Activated naive CD4-positive, alpha-beta T cell treated with anti-CD3 and anti-CD28 coated beads for 36 hours (primary cell): ENCODE measurements at regions of chr6 and their contacts with region 1.

Region 1: DNA sequence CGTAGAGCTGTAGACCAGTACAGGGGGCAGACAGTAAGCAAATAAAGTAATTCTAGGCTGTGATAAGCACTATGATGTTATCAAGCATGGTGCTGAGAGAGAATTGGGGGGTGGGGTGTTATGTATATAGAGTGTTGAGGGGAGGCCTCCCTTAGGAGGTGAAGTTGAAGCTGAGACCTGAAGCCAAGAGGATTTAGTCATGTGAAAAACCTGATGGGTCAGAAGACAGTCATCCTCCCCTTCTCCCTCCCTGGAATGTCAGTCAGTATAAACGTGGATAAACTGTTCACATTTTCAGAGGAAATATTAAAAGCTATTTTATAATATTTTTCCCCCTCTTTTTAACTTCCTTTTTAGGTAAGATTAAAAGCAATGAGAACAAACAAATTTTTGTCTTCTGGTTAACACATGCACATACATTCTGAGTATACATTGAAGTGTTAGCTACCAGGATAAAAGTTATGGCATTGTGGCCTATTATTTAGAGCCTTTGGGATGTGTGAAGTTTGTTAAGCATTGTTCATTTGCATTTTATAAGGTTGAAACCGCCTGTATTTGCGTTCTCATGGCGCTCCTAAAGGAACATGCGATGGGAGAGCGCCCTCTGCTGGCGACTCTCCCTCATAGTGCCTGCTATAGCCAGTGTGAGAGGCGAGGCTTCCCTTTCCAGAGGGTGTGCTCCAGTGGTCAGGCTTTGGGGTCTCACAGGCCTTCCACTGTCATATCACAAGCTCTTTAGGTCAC is 35.4 kb upstream of the MAPK13 start:
- DNase-seq: peak; percentile 90
- H3K4me3 Mint-ChIP-seq: no peak overlapping the region
- H3K27ac Mint-ChIP-seq: peak overlapping the region; percentile 42
- H3K4me1 Mint-ChIP-seq: peaks cover 29% of the 10 kb centered on the region
- H3K27me3 Mint-ChIP-seq: no peaks in the 10 kb centered on the region

Region 2: DNA sequence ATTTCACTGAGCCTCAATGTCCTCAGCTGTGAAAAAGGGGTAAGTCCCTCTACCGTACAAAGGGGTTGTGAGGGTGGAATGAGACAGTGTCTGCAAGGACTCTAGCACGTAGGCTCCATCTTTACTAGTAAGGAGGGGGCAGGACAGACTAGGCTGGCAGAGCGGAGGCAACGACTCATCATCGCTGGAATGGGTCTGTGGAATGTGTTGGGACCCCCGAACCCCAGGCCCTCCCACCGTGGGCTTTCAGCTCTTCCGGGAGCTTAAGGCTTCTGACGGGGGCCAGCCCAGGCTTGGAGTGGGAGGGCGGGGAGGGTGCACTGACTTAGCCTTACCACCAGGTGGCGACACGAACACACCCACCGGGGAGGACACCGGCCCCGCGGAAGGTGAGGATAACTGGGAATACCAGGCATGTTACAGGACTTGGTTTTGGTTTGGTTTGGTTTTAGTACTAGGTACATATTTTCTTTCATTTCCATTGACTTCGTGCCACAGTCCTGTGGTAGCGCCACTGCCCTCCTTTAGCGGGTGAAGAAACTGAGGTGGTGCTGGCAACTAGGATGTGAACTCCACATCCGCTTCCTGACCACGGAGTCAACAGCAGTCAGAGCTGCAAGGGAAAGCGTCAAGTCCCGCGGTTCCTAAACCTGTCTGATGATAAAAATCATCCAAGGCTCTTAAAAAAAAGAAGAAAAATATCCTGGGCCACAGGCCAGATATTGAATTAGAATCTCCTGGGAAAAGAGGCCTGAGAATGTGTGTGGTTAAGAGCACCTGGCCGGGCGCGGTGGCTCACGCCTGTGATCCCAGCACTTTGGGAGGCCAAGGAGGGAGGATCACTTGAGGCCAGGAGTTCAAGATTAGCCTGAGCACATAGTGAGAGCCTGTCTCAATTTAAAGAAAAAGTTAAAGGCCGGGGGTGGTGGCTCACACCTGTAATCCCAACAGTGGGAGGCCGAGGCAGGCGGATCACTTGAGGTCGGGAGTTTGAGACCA is 572.0 kb before region 1 on chr6:
- CTCF ChIA-PET with region 1: no interaction called
- intact Hi-C with region 1: loop called (anchors 10 kb)
- DNase-seq: peak; percentile 87
- H3K4me3 Mint-ChIP-seq: peak overlapping the region; percentile 63
- H3K27ac Mint-ChIP-seq: peak overlapping the region; percentile 61
- H3K4me1 Mint-ChIP-seq: peaks cover 5% of the 10 kb centered on the region
- H3K27me3 Mint-ChIP-seq: no peaks in the 10 kb centered on the region

Region 3: GRCh38 chr6:36033935-36034334 is 61.0 kb before region 1 on chr6:
- CTCF ChIA-PET with region 1: interaction called, 135 read pairs
- intact Hi-C with region 1: no loop called
- DNase-seq: peak; percentile 71
- H3K4me3 Mint-ChIP-seq: no peak overlapping the region
- H3K27ac Mint-ChIP-seq: no peak overlapping the region
- H3K4me1 Mint-ChIP-seq: peaks cover 71% of the 10 kb centered on the region
- H3K27me3 Mint-ChIP-seq: no peaks in the 10 kb centered on the region

Region 4: GRCh38 chr6:36083446-36083845 is 11.5 kb before region 1 on chr6:
- CTCF ChIA-PET with region 1: interaction called, 30 read pairs
- intact Hi-C with region 1: no loop called
- DNase-seq: no peak
- H3K4me3 Mint-ChIP-seq: no peak overlapping the region
- H3K27ac Mint-ChIP-seq: no peak overlapping the region
- H3K4me1 Mint-ChIP-seq: peaks cover 10% of the 10 kb centered on the region
- H3K27me3 Mint-ChIP-seq: no peaks in the 10 kb centered on the region

Region 5: DNA sequence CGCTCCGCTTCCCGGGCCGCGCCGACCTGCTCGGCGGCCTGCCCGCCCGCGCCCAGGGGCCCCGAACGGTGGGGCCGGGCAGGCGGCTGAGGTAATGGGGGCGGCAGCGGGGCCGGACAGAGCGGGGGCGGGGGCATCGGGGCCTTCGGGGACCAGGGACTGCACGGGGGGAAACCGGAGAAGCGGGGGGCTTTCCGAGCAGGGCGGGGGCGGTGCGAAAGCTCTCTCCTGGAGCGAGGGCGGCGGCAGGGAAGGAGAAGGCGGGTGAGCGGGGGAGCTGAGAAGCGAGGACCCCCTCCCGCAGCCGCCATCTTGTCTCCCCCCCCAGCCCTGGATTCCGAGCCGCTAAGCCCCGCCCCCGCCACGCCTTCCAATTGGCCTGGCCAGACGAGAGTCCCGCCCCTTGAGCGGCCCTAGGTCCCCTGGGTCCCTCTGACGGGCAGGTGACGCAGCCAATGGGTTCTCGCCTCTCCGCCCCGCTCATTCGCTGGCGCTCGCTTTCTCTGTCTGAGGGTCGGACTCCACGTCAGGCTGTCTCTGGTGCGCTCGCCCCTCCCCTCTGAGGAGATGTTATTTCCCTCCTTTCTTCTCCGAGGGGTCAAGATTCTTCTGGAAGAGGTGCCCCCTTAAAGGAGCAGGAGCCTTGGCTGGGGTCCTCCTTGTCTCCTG is 102.1 kb after region 1 on chr6:
- CTCF ChIA-PET with region 1: interaction called, 4 read pairs
- intact Hi-C with region 1: loop called (anchors 1 kb)
- DNase-seq: peak; percentile 100
- H3K4me3 Mint-ChIP-seq: peak overlapping the region; percentile 89
- H3K27ac Mint-ChIP-seq: peak overlapping the region; percentile 93
- H3K4me1 Mint-ChIP-seq: peaks cover 43% of the 10 kb centered on the region
- H3K27me3 Mint-ChIP-seq: no peaks in the 10 kb centered on the region